ENCODE measurements at regions of chr6 and their contacts with region 1.

Region 1: GRCh38 chr6:137011406-137011805 is 33.4 kb downstream of the IL20RA start:
- DNase-seq: no peak
- H3K4me3 ChIP-seq: no peak overlapping the region
- H3K27ac ChIP-seq: no peak overlapping the region
- H3K4me1 ChIP-seq: no peaks in the 10 kb centered on the region
- H3K27me3 ChIP-seq: no peaks in the 10 kb centered on the region
- CTCF ChIP-seq: no peak
- POLR2A ChIP-seq: no peak

Region 2: DNA sequence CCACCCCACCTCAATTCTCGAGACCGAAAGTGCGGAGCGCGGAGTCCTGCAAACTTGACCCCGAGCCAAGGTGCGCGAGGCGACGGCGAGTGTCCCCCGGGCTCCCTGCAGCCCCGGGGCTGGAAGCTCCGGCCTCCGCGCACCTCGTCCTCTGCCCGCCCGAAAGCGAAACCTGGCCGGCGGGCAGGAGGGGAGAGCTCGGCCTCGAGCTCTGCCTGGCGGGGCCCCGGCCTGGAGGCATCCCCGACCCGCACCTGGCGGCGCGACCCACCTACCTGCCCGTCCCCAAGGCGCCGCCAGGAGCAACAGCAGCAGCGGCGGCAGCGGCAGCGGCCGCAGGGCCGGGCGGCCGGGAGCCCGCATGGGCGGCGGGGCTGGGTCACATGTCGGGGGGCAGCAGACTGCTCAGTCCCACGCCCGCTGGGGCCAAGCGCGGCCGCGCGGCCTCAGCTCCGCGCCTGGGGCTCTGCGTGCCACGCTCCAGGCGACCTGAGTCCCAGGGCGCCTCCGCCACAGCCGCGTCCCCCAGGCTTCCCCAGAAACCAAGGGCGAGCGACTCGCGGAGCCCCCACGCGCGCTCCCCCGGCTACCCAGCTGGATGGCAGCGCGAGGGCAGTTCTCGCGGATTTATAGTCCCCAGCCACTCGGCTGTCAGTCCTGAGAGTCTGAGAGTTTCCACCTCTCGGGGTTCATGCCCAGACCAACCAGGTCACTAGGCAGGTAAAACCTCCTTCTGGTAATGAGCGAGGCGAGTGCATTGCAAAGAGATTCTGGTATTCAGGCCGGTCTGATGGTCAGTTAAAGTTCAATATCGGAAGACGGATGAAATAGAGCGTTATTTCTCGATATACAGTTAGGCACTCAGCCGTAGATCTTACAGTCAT is 33.2 kb after region 1 on chr6 and contains the start of gene IL20RA:
- intact Hi-C with region 1: no loop called
- DNase-seq: peak in 1 of 2 donors; percentile 67
- H3K4me3 ChIP-seq: peak within 1 kb of the TSS; percentile 77 to 91 (median 86)
- H3K27ac ChIP-seq: peak within 1 kb of the TSS; percentile 95
- H3K4me1 ChIP-seq: peaks cover 0 to 4% of the 10 kb centered on the region in 2 donors
- H3K27me3 ChIP-seq: no peaks in the 10 kb centered on the region
- CTCF ChIP-seq: peak in 1 of 3 donors; percentile 4
- POLR2A ChIP-seq: no peak
- total RNA-seq, gene IL20RA: 1.6 to 69.8 (median 49.2) TPM

Region 3: DNA sequence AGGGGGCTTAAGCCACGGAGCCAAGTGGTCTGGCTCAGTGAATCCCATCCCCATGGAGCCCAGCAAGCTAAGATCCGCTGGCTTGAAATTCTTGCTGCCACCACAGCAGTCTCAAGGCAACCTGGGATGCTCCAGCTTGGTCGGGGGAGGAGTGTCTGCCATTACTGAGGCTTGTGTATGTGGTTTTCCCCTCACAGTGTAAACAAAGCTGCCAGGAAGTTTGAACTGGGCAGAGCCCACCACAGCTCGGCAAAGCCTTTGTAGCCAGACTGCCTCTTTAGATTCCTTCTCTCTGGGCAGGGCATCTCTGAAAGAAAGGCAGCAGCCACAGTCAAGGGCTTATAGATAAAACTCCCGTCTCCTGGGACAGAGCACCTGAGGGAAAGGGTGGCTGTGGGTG is 58.9 kb after region 1 on chr6:
- intact Hi-C with region 1: loop called (anchors 2 kb)
- DNase-seq: no peak
- H3K4me3 ChIP-seq: no peak overlapping the region
- H3K27ac ChIP-seq: no peak overlapping the region
- H3K4me1 ChIP-seq: no peaks in the 10 kb centered on the region
- H3K27me3 ChIP-seq: no peaks in the 10 kb centered on the region
- CTCF ChIP-seq: no peak
- POLR2A ChIP-seq: no peak

Measured in breast epithelium (tissue), 4 donors.